ENCODE measurements at regions of chr17 and their contacts with region 1.

Region 1: GRCh38 chr17:80477647-80478478 is 1.5 kb upstream of the NPTX1 start:
- DNase-seq: peak; percentile 54
- ATAC-seq: peak; percentile 63
- H3K4me3 Mint-ChIP-seq: no peak overlapping the region
- H3K27ac Mint-ChIP-seq: no peak overlapping the region
- H3K4me1 Mint-ChIP-seq: peaks cover 11% of the 10 kb centered on the region
- H3K27me3 Mint-ChIP-seq: peaks cover 57% of the 10 kb centered on the region
- CTCF ChIP-seq: peak; percentile 43

Region 2: DNA sequence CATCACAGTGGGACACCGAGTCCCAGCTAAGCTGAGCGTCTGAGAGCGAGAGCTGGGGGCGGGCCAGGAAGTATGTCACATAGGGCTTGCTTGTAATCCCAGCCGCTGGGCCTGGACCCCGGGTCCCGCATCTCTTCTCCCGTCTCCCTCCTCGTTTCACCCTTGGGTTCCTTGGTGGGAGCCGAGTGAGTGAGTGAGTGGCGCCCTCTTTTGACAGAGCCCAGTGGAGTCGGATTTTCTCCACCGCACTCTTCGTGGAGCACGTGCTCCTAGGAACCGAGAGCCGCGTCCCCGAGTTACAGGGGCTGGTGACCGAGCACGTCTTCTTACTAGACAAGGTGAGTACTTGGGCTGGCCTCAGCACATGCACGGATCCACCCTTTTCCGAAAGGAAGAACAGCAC is 113.6 kb before region 1 on chr17:
- CTCF ChIA-PET with region 1: no interaction called
- POLR2A ChIA-PET with region 1: no interaction called
- intact Hi-C with region 1: no loop called
- DNase-seq: peak; percentile 47
- ATAC-seq: no peak
- H3K4me3 Mint-ChIP-seq: no peak overlapping the region
- H3K27ac Mint-ChIP-seq: no peak overlapping the region
- H3K4me1 Mint-ChIP-seq: no peaks in the 10 kb centered on the region
- H3K27me3 Mint-ChIP-seq: no peaks in the 10 kb centered on the region
- CTCF ChIP-seq: peak; percentile 11

Region 3: GRCh38 chr17:80454557-80455335 is 23.1 kb before region 1 on chr17:
- CTCF ChIA-PET with region 1: interaction called, 3 read pairs
- POLR2A ChIA-PET with region 1: interaction called, 15 read pairs
- intact Hi-C with region 1: no loop called
- DNase-seq: peak; percentile 97
- ATAC-seq: peak; percentile 93
- H3K4me3 Mint-ChIP-seq: peak overlapping the region; percentile 99
- H3K27ac Mint-ChIP-seq: peak overlapping the region; percentile 92
- H3K4me1 Mint-ChIP-seq: peaks cover 28% of the 10 kb centered on the region
- H3K27me3 Mint-ChIP-seq: peaks cover 24% of the 10 kb centered on the region
- CTCF ChIP-seq: no peak

Region 4: DNA sequence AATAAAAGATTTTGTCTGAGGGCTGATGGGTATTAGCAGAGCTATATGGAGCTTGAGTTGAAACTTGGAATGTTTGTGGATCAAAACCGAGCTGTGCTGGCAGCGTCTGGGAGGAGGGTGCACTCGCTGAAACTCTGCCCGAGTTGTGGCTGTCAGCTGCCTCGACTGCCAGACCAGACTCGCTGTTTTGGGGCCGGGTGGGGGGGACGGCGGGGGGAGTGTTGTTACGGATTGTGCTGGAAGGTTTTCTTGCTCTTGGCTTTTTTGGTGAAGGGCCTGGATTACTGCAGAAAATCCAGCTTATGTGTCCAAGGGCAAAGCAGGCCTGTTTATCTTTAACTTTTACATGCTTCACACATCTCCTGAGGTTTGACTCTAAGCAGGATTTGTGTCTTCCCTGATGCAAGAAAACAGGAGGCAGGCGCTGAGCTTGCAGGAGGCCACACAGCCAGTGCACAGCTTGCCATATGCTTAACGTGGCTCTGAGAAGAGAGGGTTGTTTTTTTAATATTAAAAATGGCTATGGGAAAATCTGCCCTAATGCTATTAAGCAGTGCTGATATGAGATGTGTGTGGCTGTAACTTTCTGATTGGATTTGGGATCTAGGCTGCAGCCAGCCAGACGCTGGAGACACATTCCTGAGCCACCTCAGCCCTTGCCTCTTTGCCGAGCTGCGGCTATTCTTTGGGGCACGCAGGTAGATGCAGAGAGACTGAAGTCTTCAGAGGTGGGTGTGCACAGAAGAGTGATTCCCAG is 46.3 kb after region 1 on chr17:
- CTCF ChIA-PET with region 1: no interaction called
- POLR2A ChIA-PET with region 1: no interaction called
- intact Hi-C with region 1: no loop called
- DNase-seq: no peak
- ATAC-seq: no peak
- H3K4me3 Mint-ChIP-seq: no peak overlapping the region
- H3K27ac Mint-ChIP-seq: no peak overlapping the region
- H3K4me1 Mint-ChIP-seq: no peaks in the 10 kb centered on the region
- H3K27me3 Mint-ChIP-seq: peaks cover 13% of the 10 kb centered on the region
- CTCF ChIP-seq: no peak

Region 5: GRCh38 chr17:80569924-80570323 is 92.1 kb after region 1 on chr17:
- CTCF ChIA-PET with region 1: no interaction called
- POLR2A ChIA-PET with region 1: no interaction called
- intact Hi-C with region 1: no loop called
- DNase-seq: no peak
- ATAC-seq: no peak
- H3K4me3 Mint-ChIP-seq: no peak overlapping the region
- H3K27ac Mint-ChIP-seq: no peak overlapping the region
- H3K4me1 Mint-ChIP-seq: peaks cover 14% of the 10 kb centered on the region
- H3K27me3 Mint-ChIP-seq: no peaks in the 10 kb centered on the region
- CTCF ChIP-seq: no peak

Measured in activated CD8-positive, alpha-beta T cell treated with anti-CD3 and anti-CD28 coated beads for 36 hours (primary cell).